Endothelial cell of umbilical vein (primary cell): ENCODE measurements at regions of chr2 and their contacts with region 1.

Region 1: DNA sequence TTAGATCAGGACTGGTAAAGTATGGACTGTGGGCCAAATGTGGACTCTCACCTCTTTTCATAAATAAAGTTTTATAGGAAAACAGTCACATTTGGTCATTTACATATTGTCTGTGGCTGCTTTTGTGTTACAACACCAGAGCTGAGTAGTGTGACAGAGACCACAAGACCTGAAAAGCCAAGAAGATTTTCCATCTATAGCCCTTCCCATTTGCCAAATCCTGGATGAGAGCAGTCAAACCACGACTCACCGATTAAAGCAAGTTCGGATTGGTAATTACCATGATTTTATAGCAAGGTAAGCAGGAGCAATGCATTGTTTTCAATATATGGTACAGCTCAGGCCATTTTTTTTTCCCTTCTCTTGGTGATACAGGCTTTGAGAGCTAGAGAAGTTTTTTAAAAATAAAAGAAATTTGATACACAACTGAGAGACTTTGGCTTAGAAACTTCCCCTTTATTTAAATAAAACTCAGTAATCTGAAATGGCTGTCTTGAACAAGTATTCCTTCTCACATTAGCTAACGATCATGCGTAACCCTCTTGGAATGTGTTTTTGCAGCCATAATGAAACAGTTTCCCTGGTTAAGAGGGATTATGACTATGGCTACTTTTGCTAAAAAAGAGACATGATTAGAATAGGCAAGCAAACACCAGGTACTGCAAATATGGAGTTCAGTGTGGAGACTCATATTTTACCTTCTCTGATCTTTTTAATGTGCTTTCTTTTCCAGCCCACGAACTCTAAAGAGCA is 9.5 kb upstream of the MALL start:
- DNase-seq: no peak
- H3K4me3 ChIP-seq: no peak overlapping the region
- H3K27ac ChIP-seq: no peak overlapping the region
- H3K4me1 ChIP-seq: peaks cover 10% of the 10 kb centered on the region
- H3K27me3 ChIP-seq: no peaks in the 10 kb centered on the region
- CTCF ChIP-seq: no peak
- POLR2A ChIP-seq: no peak

Region 2: GRCh38 chr2:110140401-110140800 is 15.3 kb after region 1 on chr2:
- CTCF ChIA-PET with region 1: interaction called, 6 read pairs
- POLR2A ChIA-PET with region 1: no interaction called
- dilution Hi-C with region 1: no loop called
- intact Hi-C with region 1: loop called (anchors 1 kb)
- DNase-seq: no peak
- H3K4me3 ChIP-seq: no peak overlapping the region
- H3K27ac ChIP-seq: no peak overlapping the region
- H3K4me1 ChIP-seq: no peaks in the 10 kb centered on the region
- H3K27me3 ChIP-seq: no peaks in the 10 kb centered on the region
- CTCF ChIP-seq: no peak
- POLR2A ChIP-seq: no peak